Activated T-helper 1 cell treated with anti-CD3 and anti-CD28 coated beads, Interleukin-12 subunit alpha, Interleukin-12 subunit beta, Interleukin-2, Interleukin-4 antibody, amounts not matched to agents 30 ng/mL and 10 ng/mL and 1 ng/mL, durations not matched to agents 14 hours and 24 hours and 36 hours (primary cell): ENCODE measurements at regions of chr9 and their contacts with region 1.

Region 1: DNA sequence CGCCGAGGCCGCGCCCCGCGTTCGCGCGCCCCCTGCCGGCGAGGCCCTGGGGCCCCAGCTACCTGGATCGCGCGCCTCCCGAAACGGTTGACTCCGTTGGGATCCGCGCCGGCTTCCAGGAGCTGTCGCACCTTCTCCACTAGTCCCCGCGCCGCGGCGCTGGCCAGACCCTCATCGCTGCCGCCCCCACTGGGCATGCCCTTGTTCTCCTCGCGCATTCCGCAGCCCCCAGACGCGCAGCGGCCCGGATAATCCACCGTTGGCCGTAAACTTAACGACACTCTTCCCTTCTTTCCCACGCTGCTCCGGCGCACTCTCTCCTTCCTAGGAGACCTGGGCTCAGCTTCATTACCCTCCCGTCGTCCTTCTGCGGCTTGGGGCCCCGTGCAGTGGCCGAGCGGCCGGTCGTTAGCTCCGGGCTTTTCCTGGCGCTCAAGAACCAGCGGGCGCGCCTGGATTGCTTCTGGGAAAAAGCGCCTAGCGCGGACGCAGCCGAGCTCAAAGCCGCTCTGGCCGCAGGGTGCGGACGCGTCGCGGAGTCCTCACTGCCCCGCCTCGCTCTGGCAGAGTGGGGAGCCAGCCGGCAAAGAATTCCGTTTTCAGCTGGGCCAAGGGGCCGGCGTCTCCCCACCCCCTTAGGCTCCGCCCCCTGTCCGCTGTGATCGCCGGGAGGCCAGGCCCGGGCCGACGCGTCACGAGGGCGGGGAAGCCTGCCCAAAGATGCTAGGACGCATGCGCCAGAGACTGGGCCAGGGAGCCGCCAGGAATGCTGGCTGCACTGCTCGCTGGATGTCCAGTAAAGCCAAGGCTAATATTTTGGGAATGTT is at the start of gene CDKN2B:
- DNase-seq: peak; percentile 66
- H3K4me3 Mint-ChIP-seq: peak within 1 kb of the TSS; percentile 82
- H3K27ac Mint-ChIP-seq: no peak within 1 kb of the TSS
- H3K4me1 Mint-ChIP-seq: peaks cover 36% of the 10 kb centered on the region
- H3K27me3 Mint-ChIP-seq: peaks cover 65% of the 10 kb centered on the region
- total RNA-seq, gene CDKN2B: 0.73 and 0.76 TPM in 2 replicates

Region 2: DNA sequence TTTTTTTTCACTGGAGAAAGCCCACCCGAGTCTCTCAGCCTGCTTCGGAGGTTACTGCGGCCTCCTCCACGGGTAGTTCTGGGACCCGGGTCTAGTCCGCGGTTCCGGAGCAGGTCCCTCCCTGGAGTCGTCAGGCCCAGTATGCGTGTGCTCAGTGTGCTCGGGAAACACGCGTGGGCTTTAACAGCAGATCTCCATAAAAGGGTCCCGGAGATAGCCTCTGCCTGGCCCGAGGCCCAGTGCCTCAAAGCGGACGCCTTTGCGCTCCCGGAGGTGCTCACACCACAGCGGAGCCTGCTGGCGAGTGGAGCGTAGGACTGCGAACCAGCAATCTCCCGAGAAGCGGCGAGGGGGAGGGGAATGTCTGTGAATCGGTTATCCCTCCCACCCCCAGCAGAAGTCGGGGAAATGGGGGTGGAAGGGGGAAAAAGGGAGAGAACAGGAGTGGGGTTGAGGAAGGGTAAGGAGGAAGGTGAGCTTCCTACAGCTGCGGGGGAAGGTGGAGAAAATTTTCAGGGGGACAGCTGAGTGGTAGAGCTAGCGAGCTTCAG is 43.5 kb before region 1 on chr9:
- intact Hi-C with region 1: loop called (anchors 1 kb)
- DNase-seq: peak; percentile 39
- H3K4me3 Mint-ChIP-seq: peak overlapping the region; percentile 43
- H3K27ac Mint-ChIP-seq: peak overlapping the region; percentile 42
- H3K4me1 Mint-ChIP-seq: peaks cover 51% of the 10 kb centered on the region
- H3K27me3 Mint-ChIP-seq: peaks cover 80% of the 10 kb centered on the region

Region 3: DNA sequence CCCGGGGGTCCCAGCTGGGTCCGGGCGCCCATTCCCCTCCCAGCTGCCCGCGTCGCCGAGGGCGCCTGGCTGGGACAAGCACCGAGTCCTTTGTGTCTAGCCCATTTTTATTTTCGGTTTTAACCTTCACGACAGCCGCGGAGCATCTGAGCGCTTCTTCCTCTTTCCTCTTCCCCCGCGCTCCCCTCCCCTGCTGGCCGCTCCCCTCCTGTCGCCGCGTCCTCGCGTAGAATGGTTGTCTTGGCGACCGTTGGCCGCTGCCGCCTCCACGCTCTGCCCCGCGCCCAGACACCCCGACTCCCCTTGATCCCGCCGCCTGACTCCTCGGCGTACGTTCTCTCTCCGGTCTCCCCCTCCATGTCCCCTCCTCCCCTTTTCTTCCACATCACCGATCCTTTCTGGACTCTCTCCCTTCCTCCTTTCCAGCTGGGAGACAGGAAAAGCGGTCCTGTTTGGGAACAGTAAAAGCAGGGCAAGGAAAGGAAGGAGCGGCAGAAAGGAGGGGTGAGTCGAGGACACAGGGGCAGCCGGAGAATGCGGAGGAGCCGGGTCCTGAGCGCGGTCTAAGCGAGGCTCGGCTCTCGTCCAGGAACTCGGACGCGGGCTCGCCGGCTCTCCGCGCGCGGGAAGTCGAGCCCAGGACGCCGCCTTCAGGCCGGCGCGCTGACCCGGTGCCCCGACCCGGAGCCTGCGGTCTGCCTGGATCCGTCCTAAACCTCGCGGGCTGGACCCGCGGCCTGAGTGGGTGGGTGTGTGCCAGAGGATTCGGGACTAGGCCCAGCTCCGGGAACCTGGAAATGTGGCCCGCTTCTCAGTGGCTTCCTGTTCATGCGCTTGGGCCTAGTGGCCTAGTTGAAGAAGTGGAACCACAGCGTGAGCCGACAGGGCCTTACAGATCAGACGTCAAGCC is 13.5 kb before region 1 on chr9:
- intact Hi-C with region 1: loop called (anchors 1 kb)
- DNase-seq: peak; percentile 80
- H3K4me3 Mint-ChIP-seq: peak overlapping the region; percentile 94
- H3K27ac Mint-ChIP-seq: peak overlapping the region; percentile 97
- H3K4me1 Mint-ChIP-seq: peaks cover 39% of the 10 kb centered on the region
- H3K27me3 Mint-ChIP-seq: peaks cover 45% of the 10 kb centered on the region

Region 4: GRCh38 chr9:22052376-22052945 is 43.5 kb after region 1 on chr9:
- intact Hi-C with region 1: loop called (anchors 1 kb)
- DNase-seq: peak; percentile 40
- H3K4me3 Mint-ChIP-seq: no peak overlapping the region
- H3K27ac Mint-ChIP-seq: peak overlapping the region; percentile 5
- H3K4me1 Mint-ChIP-seq: peaks cover 32% of the 10 kb centered on the region
- H3K27me3 Mint-ChIP-seq: peaks cover 26% of the 10 kb centered on the region

Region 5: GRCh38 chr9:22244141-22245011 is 235.4 kb after region 1 on chr9:
- intact Hi-C with region 1: loop called (anchors 1 kb)
- DNase-seq: no peak
- H3K4me3 Mint-ChIP-seq: no peak overlapping the region
- H3K27ac Mint-ChIP-seq: no peak overlapping the region
- H3K4me1 Mint-ChIP-seq: peaks cover 28% of the 10 kb centered on the region
- H3K27me3 Mint-ChIP-seq: peaks cover 61% of the 10 kb centered on the region